ENCODE measurements at regions of chr20 and their contacts with region 1.

Region 1: GRCh38 chr20:37564388-37565133 is 36.9 kb upstream of the BLCAP start:
- DNase-seq: peak; percentile 79
- ATAC-seq: peak; percentile 71
- H3K4me3 Mint-ChIP-seq: no peak overlapping the region
- H3K27ac Mint-ChIP-seq: no peak overlapping the region
- H3K4me1 Mint-ChIP-seq: peaks cover 43% of the 10 kb centered on the region
- H3K27me3 Mint-ChIP-seq: peaks cover 6% of the 10 kb centered on the region; the same call in 1 of the 2 replicates
- CTCF ChIP-seq: peak; percentile 98

Region 2: GRCh38 chr20:37053230-37053950 is 511.2 kb before region 1 on chr20:
- CTCF ChIA-PET with region 1: no interaction called
- POLR2A ChIA-PET with region 1: no interaction called
- DNase-seq: no peak
- ATAC-seq: no peak
- H3K4me3 Mint-ChIP-seq: no peak overlapping the region
- H3K27ac Mint-ChIP-seq: no peak overlapping the region
- H3K4me1 Mint-ChIP-seq: 0 out of 2 replicates have a peak, but pooled peaks cover 3% of the 10 kb centered on the region
- H3K27me3 Mint-ChIP-seq: no peaks in the 10 kb centered on the region
- CTCF ChIP-seq: no peak

Region 3: GRCh38 chr20:37202267-37202943 is 362.2 kb before region 1 on chr20:
- CTCF ChIA-PET with region 1: no interaction called
- POLR2A ChIA-PET with region 1: no interaction called
- DNase-seq: peak; percentile 36
- ATAC-seq: peak; percentile 50; the same call in 1 of the 2 replicates
- H3K4me3 Mint-ChIP-seq: no peak overlapping the region
- H3K27ac Mint-ChIP-seq: peak overlapping the region; percentile 75
- H3K4me1 Mint-ChIP-seq: no peaks in the 10 kb centered on the region
- H3K27me3 Mint-ChIP-seq: no peaks in the 10 kb centered on the region
- CTCF ChIP-seq: peak; percentile 50

Region 4: DNA sequence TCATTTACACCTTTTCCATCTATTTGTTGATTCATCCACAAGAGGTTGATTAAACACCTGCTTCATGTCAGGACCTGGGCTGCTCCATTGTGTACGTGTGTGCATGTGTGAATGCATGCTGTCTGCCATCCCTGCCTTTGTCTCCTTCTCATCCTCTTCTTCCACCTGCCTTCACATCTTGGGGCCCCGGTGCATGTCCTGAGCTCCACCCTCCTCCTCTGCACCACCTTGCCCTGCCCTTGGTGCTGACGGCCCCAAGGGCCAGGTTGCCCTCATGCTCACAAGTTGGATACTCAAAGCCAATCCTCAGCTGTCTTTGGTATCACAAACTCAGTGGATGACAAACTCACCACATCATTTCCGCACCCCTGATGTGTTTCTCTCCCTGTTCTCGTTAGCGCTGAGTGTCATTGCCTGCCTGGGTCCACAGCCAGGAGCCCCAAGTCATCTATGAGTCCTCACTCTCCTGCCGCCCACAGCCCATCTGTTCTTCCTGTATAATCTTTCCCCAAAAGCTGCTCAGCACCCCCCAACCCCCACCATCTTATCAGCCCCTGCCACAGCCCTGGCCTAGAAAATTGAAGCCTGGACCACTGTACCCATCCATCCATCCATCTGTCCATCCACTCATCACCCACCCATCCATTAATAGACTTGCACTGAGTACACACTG is 133.6 kb before region 1 on chr20:
- CTCF ChIA-PET with region 1: no interaction called
- POLR2A ChIA-PET with region 1: no interaction called
- DNase-seq: no peak
- ATAC-seq: no peak
- H3K4me3 Mint-ChIP-seq: no peak overlapping the region
- H3K27ac Mint-ChIP-seq: no peak overlapping the region
- H3K4me1 Mint-ChIP-seq: no peaks in the 10 kb centered on the region
- H3K27me3 Mint-ChIP-seq: no peaks in the 10 kb centered on the region
- CTCF ChIP-seq: no peak

Region 5: GRCh38 chr20:37449276-37449675 is 115.3 kb before region 1 on chr20:
- CTCF ChIA-PET with region 1: no interaction called
- POLR2A ChIA-PET with region 1: no interaction called
- DNase-seq: no peak
- ATAC-seq: no peak
- H3K4me3 Mint-ChIP-seq: no peak overlapping the region
- H3K27ac Mint-ChIP-seq: no peak overlapping the region
- H3K4me1 Mint-ChIP-seq: no peaks in the 10 kb centered on the region
- H3K27me3 Mint-ChIP-seq: peaks cover 10% of the 10 kb centered on the region
- CTCF ChIP-seq: no peak

Region 6: DNA sequence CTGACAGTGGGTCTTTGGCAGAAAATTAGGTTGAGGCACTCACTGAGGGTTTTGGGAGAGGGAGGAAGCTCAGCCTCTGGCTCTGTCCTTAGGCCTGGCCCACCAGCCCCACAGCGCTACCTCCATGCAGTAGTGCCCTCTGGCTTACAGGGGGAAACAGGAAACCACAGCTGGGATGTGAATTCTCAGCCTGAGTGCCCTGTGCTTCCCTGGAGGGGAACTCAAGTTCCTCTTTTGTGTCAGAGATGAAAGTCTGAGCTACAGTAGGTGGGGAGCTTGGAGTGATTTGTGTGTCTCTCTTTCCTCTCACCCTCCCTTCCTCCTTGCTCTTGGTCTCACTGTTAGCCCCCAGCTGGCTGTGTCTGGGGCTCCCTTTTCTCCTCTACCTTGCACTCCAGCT is 11.3 kb after region 1 on chr20:
- CTCF ChIA-PET with region 1: interaction called, 32 read pairs
- POLR2A ChIA-PET with region 1: no interaction called
- DNase-seq: peak; percentile 44
- ATAC-seq: peak; percentile 95
- H3K4me3 Mint-ChIP-seq: no peak overlapping the region
- H3K27ac Mint-ChIP-seq: 0 out of 2 replicates have a peak overlapping the region, but pooled peaks have one; percentile 6
- H3K4me1 Mint-ChIP-seq: peaks cover 15% of the 10 kb centered on the region
- H3K27me3 Mint-ChIP-seq: no peaks in the 10 kb centered on the region; the same call in 1 of the 2 replicates
- CTCF ChIP-seq: no peak

Region 7: DNA sequence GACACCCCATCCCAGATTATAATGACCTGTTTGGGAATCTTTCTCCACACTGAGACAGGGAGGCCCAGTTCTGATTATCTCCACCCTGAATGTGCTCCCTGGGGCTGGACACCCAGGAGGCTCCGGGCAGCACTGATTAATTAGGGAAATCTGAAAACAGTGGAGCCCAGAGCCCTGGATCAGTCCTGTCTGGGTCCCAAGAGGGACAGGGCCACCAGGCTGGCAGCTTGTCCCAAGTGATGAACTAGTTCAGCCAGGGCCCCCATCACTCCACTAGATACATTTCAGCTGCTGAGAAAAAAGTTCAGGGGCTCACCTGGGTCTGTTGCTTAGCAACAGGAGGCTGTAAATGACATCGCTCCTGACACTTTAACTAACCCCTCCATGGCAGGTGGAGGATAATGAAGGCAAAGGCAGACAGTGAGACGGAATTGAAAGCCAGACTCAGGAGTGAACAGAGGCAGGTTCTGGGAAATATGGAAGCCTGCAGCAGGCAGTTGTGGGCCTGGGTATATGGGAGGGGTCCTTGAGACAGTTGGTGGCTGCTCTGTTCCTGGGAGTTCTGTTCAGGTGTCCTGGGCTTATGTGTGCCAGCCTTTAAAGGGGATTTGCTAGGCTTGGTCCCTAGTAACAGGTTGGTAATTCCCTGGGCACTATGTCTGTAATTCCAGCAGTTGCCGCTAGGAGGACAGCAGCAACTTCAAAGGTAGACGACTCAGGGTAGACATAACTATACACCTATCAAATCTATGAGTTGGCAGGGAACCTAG is 51.0 kb after region 1 on chr20:
- CTCF ChIA-PET with region 1: interaction called, 11 read pairs
- POLR2A ChIA-PET with region 1: no interaction called
- DNase-seq: peak; percentile 85
- ATAC-seq: peak; percentile 91
- H3K4me3 Mint-ChIP-seq: no peak overlapping the region
- H3K27ac Mint-ChIP-seq: no peak overlapping the region
- H3K4me1 Mint-ChIP-seq: no peaks in the 10 kb centered on the region
- H3K27me3 Mint-ChIP-seq: peaks cover 9% of the 10 kb centered on the region
- CTCF ChIP-seq: peak; percentile 90

Region 8: GRCh38 chr20:37693635-37694626 is 129.4 kb after region 1 on chr20 and contains the start of gene CTNNBL1:
- CTCF ChIA-PET with region 1: interaction called, 11 read pairs
- POLR2A ChIA-PET with region 1: no interaction called
- DNase-seq: peak; percentile 99
- ATAC-seq: peak; percentile 96
- H3K4me3 Mint-ChIP-seq: peak within 1 kb of the TSS; percentile 99
- H3K27ac Mint-ChIP-seq: no peak within 1 kb of the TSS; the same call in 1 of the 2 replicates
- H3K4me1 Mint-ChIP-seq: peaks cover 5% of the 10 kb centered on the region
- H3K27me3 Mint-ChIP-seq: peaks cover 19% of the 10 kb centered on the region
- CTCF ChIP-seq: no peak
- total RNA-seq, gene CTNNBL1: 64.4 to 69.3 TPM (median 64.4 TPM) in 3 replicates

Region 9: GRCh38 chr20:37796121-37796520 is 231.6 kb after region 1 on chr20:
- CTCF ChIA-PET with region 1: interaction called, 10 read pairs
- POLR2A ChIA-PET with region 1: no interaction called
- DNase-seq: no peak
- ATAC-seq: no peak
- H3K4me3 Mint-ChIP-seq: no peak overlapping the region
- H3K27ac Mint-ChIP-seq: no peak overlapping the region
- H3K4me1 Mint-ChIP-seq: no peaks in the 10 kb centered on the region
- H3K27me3 Mint-ChIP-seq: no peaks in the 10 kb centered on the region
- CTCF ChIP-seq: no peak

Region 10: GRCh38 chr20:37901654-37902503 is 337.3 kb after region 1 on chr20:
- CTCF ChIA-PET with region 1: interaction called, 13 read pairs
- POLR2A ChIA-PET with region 1: no interaction called
- DNase-seq: peak; percentile 49
- ATAC-seq: peak; percentile 57
- H3K4me3 Mint-ChIP-seq: peak overlapping the region; percentile 82
- H3K27ac Mint-ChIP-seq: no peak overlapping the region
- H3K4me1 Mint-ChIP-seq: peaks cover 28% of the 10 kb centered on the region
- H3K27me3 Mint-ChIP-seq: peaks cover 26% of the 10 kb centered on the region
- CTCF ChIP-seq: peak; percentile 29; the same call in 1 of the 2 replicates

Region 11: GRCh38 chr20:38073307-38074071 is 508.9 kb after region 1 on chr20:
- CTCF ChIA-PET with region 1: interaction called, 10 read pairs
- POLR2A ChIA-PET with region 1: no interaction called
- DNase-seq: no peak
- ATAC-seq: peak; percentile 83
- H3K4me3 Mint-ChIP-seq: no peak overlapping the region
- H3K27ac Mint-ChIP-seq: no peak overlapping the region
- H3K4me1 Mint-ChIP-seq: peaks cover 6% of the 10 kb centered on the region
- H3K27me3 Mint-ChIP-seq: no peaks in the 10 kb centered on the region
- CTCF ChIP-seq: no peak; the same call in 1 of the 2 replicates